ENCODE measurements at regions of chr10 and their contacts with region 1.

Region 1: DNA sequence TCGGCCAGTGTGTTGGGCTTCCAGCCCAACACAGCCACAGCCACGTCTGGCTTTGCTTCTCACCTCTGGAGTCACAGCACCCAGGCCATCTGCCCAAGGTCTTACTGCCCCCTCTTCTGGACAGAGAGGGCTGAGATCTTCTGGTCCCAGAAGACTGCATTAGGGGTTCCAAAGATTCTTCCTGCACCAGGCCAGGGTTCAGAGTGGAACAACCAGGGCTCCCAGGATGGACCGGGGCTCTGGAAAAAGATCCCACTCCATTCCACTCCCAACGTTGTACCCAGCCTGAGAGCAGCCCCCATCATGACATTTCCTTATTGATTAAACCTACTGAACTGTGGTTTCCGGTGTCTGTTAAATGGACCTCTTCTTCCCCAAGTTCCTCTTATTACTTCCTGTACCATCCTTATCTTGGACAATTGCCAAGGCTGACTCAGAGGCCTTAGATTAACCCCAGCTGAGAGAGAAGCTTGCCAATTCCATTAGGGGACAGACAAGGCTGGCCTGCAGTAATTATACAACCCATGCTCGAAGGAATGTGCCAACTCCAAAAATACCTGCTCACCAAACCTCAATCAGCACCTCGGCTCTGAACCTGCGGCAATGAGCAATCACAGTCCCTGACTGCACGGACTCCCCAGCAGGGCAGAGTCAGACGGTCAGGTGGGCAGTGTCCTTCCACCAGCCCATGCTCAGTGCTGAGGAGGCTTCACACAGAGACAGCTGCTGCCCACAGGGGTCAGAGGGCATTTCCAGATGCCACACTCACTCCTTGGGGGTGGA is 47.9 kb upstream of the NPFFR1 start:
- DNase-seq: peak; percentile 54
- ATAC-seq: peak; percentile 68
- H3K4me3 ChIP-seq: no peak overlapping the region
- H3K27ac ChIP-seq: no peak overlapping the region
- H3K4me1 ChIP-seq: peaks cover 3% of the 10 kb centered on the region; the same call in 1 of the 2 replicates
- H3K27me3 ChIP-seq: no peaks in the 10 kb centered on the region
- CTCF ChIP-seq: no peak

Region 2: DNA sequence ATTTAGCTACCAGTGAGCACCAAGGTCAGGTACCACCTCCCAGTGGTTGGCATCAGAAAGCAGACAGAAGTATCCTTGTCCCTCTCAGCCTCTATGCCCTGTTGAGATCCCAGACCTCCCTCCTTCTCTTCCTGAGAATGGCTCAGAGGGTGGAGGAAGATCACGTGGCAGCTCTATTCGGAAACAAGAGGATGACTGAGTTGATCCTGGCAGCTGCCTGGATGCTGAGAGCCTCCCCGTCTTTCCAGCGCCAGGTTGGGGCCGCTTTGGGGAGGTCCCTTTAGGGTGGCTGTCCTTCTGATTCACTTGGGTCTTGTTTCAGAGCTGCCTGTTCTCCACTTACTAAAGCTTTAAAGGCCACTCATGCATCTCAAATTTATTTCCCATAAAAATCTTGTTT is 10.9 kb before region 1 on chr10:
- CTCF ChIA-PET with region 1: no interaction called
- POLR2A ChIA-PET with region 1: interaction called, 11 read pairs
- in situ Hi-C with region 1: no loop called
- intact Hi-C with region 1: no loop called
- DNase-seq: no peak
- ATAC-seq: no peak
- H3K4me3 ChIP-seq: no peak overlapping the region
- H3K27ac ChIP-seq: no peak overlapping the region
- H3K4me1 ChIP-seq: no peaks in the 10 kb centered on the region
- H3K27me3 ChIP-seq: no peaks in the 10 kb centered on the region
- CTCF ChIP-seq: no peak

Region 3: DNA sequence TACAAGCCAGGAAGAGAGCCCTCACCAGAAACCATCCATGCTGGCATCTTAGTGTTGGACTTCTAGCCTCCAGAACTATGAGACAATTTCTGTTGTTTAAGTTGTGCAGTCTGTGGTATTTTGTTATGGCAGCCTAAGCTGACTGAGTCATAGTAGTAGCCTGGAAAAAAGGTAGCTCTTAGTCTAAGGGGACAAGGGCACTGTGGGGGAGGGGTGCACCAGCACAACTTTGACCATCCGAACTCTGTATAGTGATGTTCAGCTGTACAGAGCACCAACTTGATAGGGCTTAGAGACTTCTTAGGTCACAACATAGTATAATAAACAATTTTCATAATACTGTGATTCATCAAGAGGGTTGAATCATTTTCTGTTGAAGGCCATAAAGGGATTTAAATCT is 86.6 kb after region 1 on chr10:
- CTCF ChIA-PET with region 1: no interaction called
- POLR2A ChIA-PET with region 1: interaction called, 12 read pairs
- in situ Hi-C with region 1: no loop called
- intact Hi-C with region 1: no loop called
- DNase-seq: no peak
- ATAC-seq: peak; percentile 53; the same call in 1 of the 2 replicates
- H3K4me3 ChIP-seq: no peak overlapping the region
- H3K27ac ChIP-seq: no peak overlapping the region
- H3K4me1 ChIP-seq: no peaks in the 10 kb centered on the region
- H3K27me3 ChIP-seq: no peaks in the 10 kb centered on the region
- CTCF ChIP-seq: no peak

Measured in Panc1 (cell line).